ENCODE measurements at regions of chr6 and their contacts with region 1.

Region 1: GRCh38 chr6:44475779-44476434 is 88.4 kb downstream of the CDC5L start:
- DNase-seq: peak; percentile 92
- H3K4me3 ChIP-seq: peak overlapping the region in 1 of 2 experiments; percentile 16; a peak in 1 of 4 replicates
- H3K27ac ChIP-seq: no peak overlapping the region
- H3K4me1 ChIP-seq: peaks cover 4 to 6% of the 10 kb centered on the region in 2 experiments; a peak in 2 of 4 replicates
- H3K27me3 ChIP-seq: no peaks in the 10 kb centered on the region
- CTCF ChIP-seq: peak; percentile 91
- EP300 ChIP-seq: no peak
- RAD21 ChIP-seq: peak; percentile 98

Region 2: DNA sequence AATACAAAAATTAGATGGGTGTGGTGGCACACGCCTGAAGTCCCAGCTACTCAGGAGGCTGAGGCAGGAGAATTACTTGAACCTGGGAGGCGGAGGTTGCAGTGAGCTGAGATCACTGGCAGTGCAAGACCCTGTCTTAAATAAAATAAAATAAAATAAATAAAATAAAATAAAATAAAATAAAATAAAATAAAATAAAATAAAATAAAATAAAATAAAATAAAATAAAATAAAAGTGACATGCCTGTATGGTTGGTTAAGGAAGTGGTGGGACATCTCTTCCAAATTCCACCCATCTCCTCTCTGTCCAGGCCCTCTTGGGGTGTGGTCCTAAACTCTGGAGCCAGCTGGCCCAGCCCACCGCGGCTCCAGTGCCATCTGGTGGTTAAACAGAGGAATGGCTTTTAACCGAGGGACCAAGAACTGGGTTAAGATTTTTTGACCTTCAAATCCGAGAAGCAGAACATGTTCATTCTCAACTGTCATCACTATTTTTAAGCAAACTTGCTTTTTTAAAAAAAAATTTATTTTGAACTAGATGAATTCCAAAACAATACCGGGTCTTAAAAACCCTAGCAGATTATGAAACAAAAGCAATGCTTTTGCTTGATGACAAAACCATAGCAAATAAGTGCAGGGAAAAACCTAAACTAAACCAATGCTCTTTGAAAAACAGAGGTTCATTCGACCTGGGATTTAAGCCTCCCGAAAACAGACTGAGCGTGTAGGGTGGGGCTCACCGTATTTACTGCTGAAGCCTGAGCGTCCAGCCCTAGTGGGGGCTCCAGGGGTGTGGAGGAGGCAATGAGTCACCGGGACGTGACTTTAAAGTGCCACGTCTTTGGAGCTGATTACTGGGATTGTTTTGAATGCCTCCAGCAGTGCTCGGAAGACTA is 19.6 kb before region 1 on chr6:
- CTCF ChIA-PET with region 1: interaction called, 222 read pairs
- POLR2A ChIA-PET with region 1: no interaction called
- DNase-seq: peak; percentile 79
- H3K4me3 ChIP-seq: peak overlapping the region in 1 of 2 experiments; percentile 51; a peak in 1 of 4 replicates
- H3K27ac ChIP-seq: no peak overlapping the region
- H3K4me1 ChIP-seq: peaks cover 0 to 4% of the 10 kb centered on the region in 2 experiments; a peak in 2 of 4 replicates
- H3K27me3 ChIP-seq: no peaks in the 10 kb centered on the region
- CTCF ChIP-seq: peak; percentile 86
- EP300 ChIP-seq: no peak
- RAD21 ChIP-seq: peak; percentile 80

Region 3: GRCh38 chr6:44593539-44593944 is 117.6 kb after region 1 on chr6:
- CTCF ChIA-PET with region 1: interaction called, 18 read pairs
- POLR2A ChIA-PET with region 1: no interaction called
- DNase-seq: peak; percentile 63
- H3K4me3 ChIP-seq: peak overlapping the region in 1 of 2 experiments; percentile 10; a peak in 1 of 4 replicates
- H3K27ac ChIP-seq: no peak overlapping the region
- H3K4me1 ChIP-seq: no peaks in the 10 kb centered on the region
- H3K27me3 ChIP-seq: peaks cover 14% of the 10 kb centered on the region; the same call in 1 of the 2 replicates
- CTCF ChIP-seq: peak; percentile 73
- EP300 ChIP-seq: no peak
- RAD21 ChIP-seq: peak; percentile 67

Region 4: GRCh38 chr6:44655412-44656342 is 179.8 kb after region 1 on chr6:
- CTCF ChIA-PET with region 1: interaction called, 33 read pairs
- POLR2A ChIA-PET with region 1: no interaction called
- DNase-seq: peak; percentile 79
- H3K4me3 ChIP-seq: peak overlapping the region in 1 of 2 experiments; percentile 44; a peak in 1 of 4 replicates
- H3K27ac ChIP-seq: no peak overlapping the region
- H3K4me1 ChIP-seq: peaks cover 2 to 4% of the 10 kb centered on the region in 2 experiments; a peak in 3 of 4 replicates
- H3K27me3 ChIP-seq: no peaks in the 10 kb centered on the region
- CTCF ChIP-seq: peak; percentile 96
- EP300 ChIP-seq: no peak
- RAD21 ChIP-seq: peak; percentile 95

Region 5: DNA sequence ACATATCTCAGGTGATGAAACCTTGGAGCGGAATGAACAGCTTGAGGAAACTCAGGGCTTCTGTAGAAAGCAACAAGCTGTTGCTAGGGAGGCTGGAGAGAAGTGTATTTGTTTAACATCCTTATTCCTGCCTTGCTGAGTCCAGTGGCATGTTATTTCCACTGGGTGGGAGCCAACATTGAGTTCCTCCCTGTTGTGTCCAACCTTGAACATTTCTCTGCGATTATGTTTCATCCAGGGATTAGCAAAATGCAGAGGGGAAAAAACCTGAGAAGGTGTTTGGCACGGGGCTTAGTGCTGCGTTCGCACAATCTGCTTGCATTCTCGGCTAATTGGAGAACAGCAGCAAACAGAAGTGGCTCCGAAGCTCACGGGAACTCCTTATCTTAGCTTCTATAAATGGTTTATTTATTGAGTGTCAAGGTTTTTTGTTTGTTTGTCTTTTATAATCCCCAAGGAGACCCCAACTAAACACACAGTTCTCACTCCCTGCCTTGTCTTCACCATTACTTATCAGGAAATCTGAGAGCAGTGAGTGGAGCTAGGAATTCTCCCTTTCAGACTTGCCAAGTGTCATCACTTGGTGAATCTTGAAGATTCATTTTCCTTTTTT is 324.4 kb after region 1 on chr6:
- CTCF ChIA-PET with region 1: no interaction called
- POLR2A ChIA-PET with region 1: no interaction called
- DNase-seq: no peak
- H3K4me3 ChIP-seq: no peak overlapping the region
- H3K27ac ChIP-seq: no peak overlapping the region
- H3K4me1 ChIP-seq: peaks cover 2 to 7% of the 10 kb centered on the region in 2 experiments; a peak in 1 of 4 replicates
- H3K27me3 ChIP-seq: no peaks in the 10 kb centered on the region
- CTCF ChIP-seq: no peak
- EP300 ChIP-seq: no peak
- RAD21 ChIP-seq: no peak

Region 6: GRCh38 chr6:45930420-45931040 is 1454.6 kb after region 1 on chr6:
- CTCF ChIA-PET with region 1: interaction called, 12 read pairs
- POLR2A ChIA-PET with region 1: no interaction called
- DNase-seq: peak; percentile 62
- H3K4me3 ChIP-seq: peak overlapping the region in 1 of 2 experiments; percentile 45; a peak in 1 of 4 replicates
- H3K27ac ChIP-seq: no peak overlapping the region
- H3K4me1 ChIP-seq: no peaks in the 10 kb centered on the region
- H3K27me3 ChIP-seq: peaks cover 40% of the 10 kb centered on the region; the same call in 1 of the 2 replicates
- CTCF ChIP-seq: peak; percentile 98
- EP300 ChIP-seq: no peak
- RAD21 ChIP-seq: peak; percentile 63

Measured in SK-N-SH (cell line).